ENCODE measurements at regions of chr15 and their contacts with region 1.

Region 1: DNA sequence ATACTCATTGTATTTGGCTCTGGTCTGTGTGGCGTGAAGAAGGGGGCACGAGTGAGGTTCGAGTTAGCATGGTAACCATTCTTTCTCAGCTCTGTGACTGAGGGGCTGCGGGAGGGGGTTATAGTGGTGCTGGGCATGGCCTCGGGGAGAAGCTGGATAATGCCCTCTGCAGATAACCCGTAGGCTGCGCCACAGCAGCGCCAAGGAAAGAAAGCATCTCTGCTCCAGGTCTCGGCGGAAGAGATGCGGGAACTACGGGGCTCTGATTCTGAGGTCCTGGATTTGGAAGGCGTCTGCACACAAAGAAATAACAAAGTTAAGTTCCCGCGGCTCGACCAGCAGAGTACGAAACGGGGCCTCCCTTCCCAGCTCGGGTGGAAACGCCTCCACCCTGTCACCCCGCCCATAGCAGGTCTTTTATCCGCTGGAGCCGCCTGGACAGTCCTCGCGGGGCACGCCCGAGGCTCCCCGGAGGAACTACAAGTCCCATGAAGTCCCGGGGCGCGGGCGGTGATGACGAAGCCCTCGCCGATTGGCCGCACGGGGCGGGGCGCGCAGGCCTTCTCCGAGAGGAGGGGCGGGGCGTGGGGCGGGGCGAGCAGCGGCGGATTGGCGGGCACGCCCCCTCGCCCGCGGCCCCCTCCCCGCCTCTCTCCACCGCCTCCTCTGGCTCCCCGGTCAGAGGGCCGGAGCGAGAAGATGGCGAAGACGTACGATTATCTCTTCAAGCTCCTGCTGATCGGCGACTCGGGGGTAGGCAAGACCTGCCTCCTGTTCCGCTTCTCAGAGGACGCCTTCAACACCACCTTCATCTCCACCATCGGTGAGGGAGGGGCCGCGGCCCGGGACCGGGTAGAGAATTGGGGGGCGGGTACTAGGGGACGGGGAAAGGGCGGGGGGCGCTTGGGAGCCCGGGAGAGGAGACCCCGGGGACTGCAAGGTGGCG is at the start of gene RAB8B:
- DNase-seq: peak; percentile 93
- ATAC-seq: peak; percentile 83
- H3K4me3 Mint-ChIP-seq: peak within 1 kb of the TSS; percentile 96
- H3K27ac Mint-ChIP-seq: peak within 1 kb of the TSS; percentile 95
- H3K4me1 Mint-ChIP-seq: peaks cover 57% of the 10 kb centered on the region
- H3K27me3 Mint-ChIP-seq: no peaks in the 10 kb centered on the region
- CTCF ChIP-seq: no peak
- total RNA-seq, gene RAB8B: 93.1 and 94.4 TPM in 2 replicates

Region 2: GRCh38 chr15:63122002-63122893 is 67.0 kb before region 1 on chr15:
- CTCF ChIA-PET with region 1: no interaction called
- POLR2A ChIA-PET with region 1: interaction called, 5 read pairs
- intact Hi-C with region 1: loop called (anchors 1 kb)
- DNase-seq: peak; percentile 77
- ATAC-seq: peak; percentile 88
- H3K4me3 Mint-ChIP-seq: peak overlapping the region; percentile 86
- H3K27ac Mint-ChIP-seq: peak overlapping the region; percentile 86
- H3K4me1 Mint-ChIP-seq: peaks cover 15% of the 10 kb centered on the region
- H3K27me3 Mint-ChIP-seq: no peaks in the 10 kb centered on the region
- CTCF ChIP-seq: no peak

Region 3: DNA sequence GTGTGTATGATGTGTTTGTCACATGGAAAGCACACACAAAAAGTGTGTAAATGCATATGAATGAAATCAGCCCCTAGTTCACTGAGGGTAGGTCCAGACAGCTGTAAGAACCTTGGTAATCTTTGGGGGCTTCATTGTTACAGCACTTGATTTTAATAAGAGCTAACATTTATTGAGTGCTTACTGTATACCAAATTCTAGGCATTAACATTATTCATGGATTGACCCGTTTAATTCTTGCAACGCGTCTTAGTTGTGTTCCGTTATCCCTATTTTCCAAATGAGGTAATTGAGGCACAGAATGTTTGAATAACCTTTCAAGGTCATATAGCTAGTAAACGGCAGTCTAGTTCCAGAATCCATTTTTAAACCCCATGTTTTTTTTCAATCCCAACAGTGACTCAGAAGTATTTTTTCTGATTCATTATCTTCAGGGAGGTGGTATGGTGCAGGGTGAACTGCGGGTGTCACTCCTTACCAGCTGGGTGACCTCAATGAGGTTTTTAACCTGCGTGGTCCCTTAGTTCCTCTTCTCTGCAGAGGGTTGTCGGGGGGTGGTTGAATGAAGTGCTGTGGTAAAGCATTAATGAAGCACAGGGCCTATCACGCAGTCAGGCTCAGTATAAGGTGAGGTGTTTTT is 14.4 kb after region 1 on chr15:
- CTCF ChIA-PET with region 1: interaction called, 13 read pairs
- POLR2A ChIA-PET with region 1: interaction called, 22 read pairs
- intact Hi-C with region 1: loop called (anchors 1 kb)
- DNase-seq: no peak
- ATAC-seq: peak; percentile 99
- H3K4me3 Mint-ChIP-seq: no peak overlapping the region
- H3K27ac Mint-ChIP-seq: peak overlapping the region; percentile 73
- H3K4me1 Mint-ChIP-seq: peaks cover 85% of the 10 kb centered on the region
- H3K27me3 Mint-ChIP-seq: no peaks in the 10 kb centered on the region
- CTCF ChIP-seq: no peak

Region 4: GRCh38 chr15:63218100-63218808 is 29.1 kb after region 1 on chr15:
- CTCF ChIA-PET with region 1: no interaction called
- POLR2A ChIA-PET with region 1: interaction called, 17 read pairs
- intact Hi-C with region 1: no loop called
- DNase-seq: no peak
- ATAC-seq: no peak
- H3K4me3 Mint-ChIP-seq: no peak overlapping the region
- H3K27ac Mint-ChIP-seq: no peak overlapping the region
- H3K4me1 Mint-ChIP-seq: peaks cover 71% of the 10 kb centered on the region
- H3K27me3 Mint-ChIP-seq: no peaks in the 10 kb centered on the region
- CTCF ChIP-seq: no peak

Region 5: DNA sequence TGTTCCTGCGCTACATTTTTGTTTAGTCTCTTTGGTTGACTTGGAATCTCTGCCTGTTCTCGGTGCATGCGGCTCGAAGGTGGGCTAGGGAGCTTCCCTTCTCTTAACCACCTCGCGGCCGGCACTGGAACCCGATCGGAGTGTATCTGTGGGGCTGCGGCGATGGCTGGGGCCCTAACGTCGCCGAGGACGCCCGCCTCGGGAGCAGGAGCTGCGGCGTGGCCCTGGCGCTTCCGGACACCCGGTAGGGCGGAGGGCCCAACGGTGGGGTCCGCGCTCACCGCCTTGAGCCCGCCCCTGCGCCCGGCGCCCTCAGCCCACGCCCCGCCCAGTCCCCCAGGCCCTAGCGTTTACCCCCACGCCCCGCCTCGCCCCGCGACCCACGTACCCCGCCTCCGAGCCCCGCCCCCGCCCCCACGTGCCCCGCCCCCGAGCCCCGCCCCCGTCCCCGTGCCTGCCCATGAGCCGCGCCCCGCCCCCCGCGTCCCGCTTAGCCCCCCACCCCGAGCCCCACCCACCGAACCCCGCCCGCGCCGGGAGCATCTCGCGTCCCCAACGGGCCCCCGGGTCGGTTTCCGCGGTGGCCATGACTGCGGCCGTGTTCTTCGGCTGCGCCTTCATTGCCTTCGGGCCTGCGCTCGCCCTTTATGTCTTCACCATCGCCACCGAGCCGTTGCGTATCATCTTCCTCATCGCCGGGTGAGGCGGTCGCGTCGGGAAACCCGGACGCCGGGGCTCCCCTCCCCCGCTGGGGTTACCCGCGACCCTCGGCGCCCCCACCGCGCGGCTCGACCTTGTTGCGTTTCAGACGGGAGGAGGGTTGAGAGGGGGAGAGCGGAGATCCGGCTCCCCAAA is 88.1 kb after region 1 on chr15 and contains the start of gene APH1B:
- CTCF ChIA-PET with region 1: interaction called, 3 read pairs
- POLR2A ChIA-PET with region 1: interaction called, 37 read pairs
- intact Hi-C with region 1: loop called (anchors 1 kb)
- DNase-seq: peak; percentile 82
- ATAC-seq: peak; percentile 96
- H3K4me3 Mint-ChIP-seq: peak within 1 kb of the TSS; percentile 90
- H3K27ac Mint-ChIP-seq: peak within 1 kb of the TSS; percentile 89
- H3K4me1 Mint-ChIP-seq: peaks cover 21% of the 10 kb centered on the region
- H3K27me3 Mint-ChIP-seq: no peaks in the 10 kb centered on the region
- CTCF ChIP-seq: no peak
- total RNA-seq, gene APH1B: 22.1 and 23.7 TPM in 2 replicates

Region 6: DNA sequence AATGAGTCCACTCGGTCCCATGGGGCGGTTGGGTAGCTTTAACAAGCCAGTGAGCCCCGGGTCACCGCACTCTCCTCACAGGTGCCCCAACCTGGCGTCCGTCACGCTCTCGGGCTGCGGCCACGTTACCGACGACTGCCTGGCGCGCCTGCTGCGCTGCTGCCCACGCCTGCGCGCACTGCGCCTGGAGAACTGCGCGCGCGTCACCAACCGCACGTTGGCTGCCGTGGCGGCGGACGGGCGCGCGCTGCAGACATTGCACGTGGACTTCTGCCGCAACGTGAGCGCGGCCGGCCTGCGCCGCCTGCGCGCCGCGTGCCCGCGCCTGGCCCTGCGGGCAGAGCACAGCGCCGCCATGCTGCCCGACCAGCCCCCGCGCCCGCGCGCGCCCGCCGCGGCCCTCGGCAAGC is 411.4 kb after region 1 on chr15:
- CTCF ChIA-PET with region 1: no interaction called
- POLR2A ChIA-PET with region 1: no interaction called
- intact Hi-C with region 1: loop called (anchors 1 kb)
- DNase-seq: peak; percentile 90
- ATAC-seq: peak; percentile 71
- H3K4me3 Mint-ChIP-seq: peak overlapping the region; percentile 91
- H3K27ac Mint-ChIP-seq: peak overlapping the region; percentile 91
- H3K4me1 Mint-ChIP-seq: peaks cover 75% of the 10 kb centered on the region
- H3K27me3 Mint-ChIP-seq: no peaks in the 10 kb centered on the region
- CTCF ChIP-seq: no peak

Region 7: GRCh38 chr15:63986751-63987341 is 797.6 kb after region 1 on chr15:
- CTCF ChIA-PET with region 1: no interaction called
- POLR2A ChIA-PET with region 1: no interaction called
- intact Hi-C with region 1: no loop called
- DNase-seq: no peak
- ATAC-seq: peak; percentile 82
- H3K4me3 Mint-ChIP-seq: peak overlapping the region; percentile 61
- H3K27ac Mint-ChIP-seq: peak overlapping the region; percentile 86
- H3K4me1 Mint-ChIP-seq: peaks cover 60% of the 10 kb centered on the region
- H3K27me3 Mint-ChIP-seq: no peaks in the 10 kb centered on the region
- CTCF ChIP-seq: no peak